ENCODE measurements at regions of chr1 and their contacts with region 1.

Region 1: GRCh38 chr1:205485338-205486228 is 18.9 kb upstream of the CDK18 start:
- DNase-seq: peak; percentile 85
- ATAC-seq: peak; percentile 78
- H3K4me3 ChIP-seq: no peak overlapping the region
- H3K4me3 Mint-ChIP-seq: no peak overlapping the region
- H3K27ac ChIP-seq: no peak overlapping the region
- H3K27ac Mint-ChIP-seq: peak overlapping the region; percentile 17
- H3K4me1 ChIP-seq: peaks cover 22 to 25% of the 10 kb centered on the region in 2 donors
- H3K4me1 Mint-ChIP-seq: peaks cover 28% of the 10 kb centered on the region
- H3K27me3 ChIP-seq: peaks cover 0 to 40% (median 5%) of the 10 kb centered on the region in 4 experiments
- H3K27me3 Mint-ChIP-seq: peaks cover 47% of the 10 kb centered on the region
- CTCF ChIP-seq: peak; percentile 94

Region 2: GRCh38 chr1:205321164-205321958 is 164.2 kb before region 1 on chr1 and contains the start of gene NUAK2:
- CTCF ChIA-PET with region 1: interaction called, 98 read pairs
- POLR2A ChIA-PET with region 1: no interaction called
- intact Hi-C with region 1: no loop called
- DNase-seq: peak; percentile 89
- ATAC-seq: peak; percentile 90
- H3K4me3 ChIP-seq: peak within 1 kb of the TSS; percentile 65 to 100 (median 98)
- H3K4me3 Mint-ChIP-seq: peak within 1 kb of the TSS; percentile 97
- H3K27ac ChIP-seq: peak within 1 kb of the TSS; percentile 65 to 98
- H3K27ac Mint-ChIP-seq: peak within 1 kb of the TSS; percentile 95
- H3K4me1 ChIP-seq: peaks cover 52 to 54% of the 10 kb centered on the region in 2 donors
- H3K4me1 Mint-ChIP-seq: peaks cover 62% of the 10 kb centered on the region
- H3K27me3 ChIP-seq: no peaks in the 10 kb centered on the region
- H3K27me3 Mint-ChIP-seq: peaks cover 2% of the 10 kb centered on the region
- CTCF ChIP-seq: peak; percentile 35
- total RNA-seq, gene NUAK2: 102 and 105 TPM in 2 replicates

Region 3: GRCh38 chr1:205344066-205344928 is 141.3 kb before region 1 on chr1:
- CTCF ChIA-PET with region 1: interaction called, 131 read pairs
- POLR2A ChIA-PET with region 1: interaction called, 3 read pairs
- intact Hi-C with region 1: no loop called
- DNase-seq: peak; percentile 69
- ATAC-seq: peak; percentile 61
- H3K4me3 ChIP-seq: peak overlapping the region in 4 of 5 experiments; percentile 37 to 51 (median 50)
- H3K4me3 Mint-ChIP-seq: peak overlapping the region; percentile 84
- H3K27ac ChIP-seq: no peak overlapping the region
- H3K27ac Mint-ChIP-seq: peak overlapping the region; percentile 32
- H3K4me1 ChIP-seq: peaks cover 34 to 42% of the 10 kb centered on the region in 2 donors
- H3K4me1 Mint-ChIP-seq: peaks cover 48% of the 10 kb centered on the region
- H3K27me3 ChIP-seq: peaks cover 0 to 20% (median 10%) of the 10 kb centered on the region in 4 experiments
- H3K27me3 Mint-ChIP-seq: peaks cover 8% of the 10 kb centered on the region
- CTCF ChIP-seq: no peak

Region 4: DNA sequence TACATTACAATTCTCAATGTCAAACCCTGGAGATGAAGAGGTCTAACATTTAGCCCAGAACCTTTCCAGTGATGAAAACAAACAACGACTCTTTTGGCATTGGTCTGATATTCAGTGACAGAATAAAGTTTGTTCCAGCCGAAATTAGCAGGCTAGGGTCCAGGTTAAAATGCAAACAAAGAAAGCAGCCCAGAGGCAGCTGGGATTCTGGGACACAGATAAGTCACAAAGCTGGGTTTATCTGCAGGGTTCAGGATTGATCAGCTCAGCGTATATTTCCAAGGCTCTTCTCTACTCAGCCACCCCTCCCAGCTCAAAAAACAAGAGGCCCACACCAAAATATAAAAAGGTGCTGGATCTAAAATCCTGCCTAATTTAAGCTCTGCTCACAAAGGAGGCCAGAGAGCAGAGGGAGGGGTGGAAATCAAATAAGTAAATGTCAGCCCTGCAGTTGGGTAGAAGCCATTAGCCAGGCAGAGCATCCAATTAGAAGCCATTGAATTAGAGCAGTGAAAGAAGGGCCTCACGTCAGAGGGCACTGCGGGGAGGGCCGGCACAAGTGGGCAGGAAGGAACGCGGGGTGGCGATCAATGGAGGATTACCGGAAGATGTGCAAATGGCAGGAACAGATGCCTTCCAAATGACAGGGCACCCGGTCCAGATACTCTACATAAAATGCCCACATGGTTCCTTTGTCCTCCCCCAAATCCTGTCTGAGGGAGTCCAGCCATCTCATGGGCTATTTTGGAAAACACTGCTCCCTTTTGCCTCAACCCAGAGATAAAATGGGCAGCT is 125.6 kb before region 1 on chr1:
- CTCF ChIA-PET with region 1: interaction called, 115 read pairs
- POLR2A ChIA-PET with region 1: no interaction called
- intact Hi-C with region 1: no loop called
- DNase-seq: no peak
- ATAC-seq: no peak
- H3K4me3 ChIP-seq: no peak overlapping the region
- H3K4me3 Mint-ChIP-seq: no peak overlapping the region
- H3K27ac ChIP-seq: no peak overlapping the region
- H3K27ac Mint-ChIP-seq: no peak overlapping the region
- H3K4me1 ChIP-seq: peaks cover 0 to 5% of the 10 kb centered on the region in 2 donors
- H3K4me1 Mint-ChIP-seq: peaks cover 4% of the 10 kb centered on the region
- H3K27me3 ChIP-seq: peaks cover 0 to 4% (median 0%) of the 10 kb centered on the region in 4 experiments
- H3K27me3 Mint-ChIP-seq: peaks cover 16% of the 10 kb centered on the region
- CTCF ChIP-seq: no peak

Region 5: GRCh38 chr1:205422993-205423625 is 62.5 kb before region 1 on chr1:
- CTCF ChIA-PET with region 1: interaction called, 59 read pairs
- POLR2A ChIA-PET with region 1: no interaction called
- intact Hi-C with region 1: no loop called
- DNase-seq: no peak
- ATAC-seq: no peak
- H3K4me3 ChIP-seq: no peak overlapping the region
- H3K4me3 Mint-ChIP-seq: no peak overlapping the region
- H3K27ac ChIP-seq: no peak overlapping the region
- H3K27ac Mint-ChIP-seq: no peak overlapping the region
- H3K4me1 ChIP-seq: no peaks in the 10 kb centered on the region
- H3K4me1 Mint-ChIP-seq: no peaks in the 10 kb centered on the region
- H3K27me3 ChIP-seq: peaks cover 0 to 12% (median 2%) of the 10 kb centered on the region in 4 experiments
- H3K27me3 Mint-ChIP-seq: peaks cover 30% of the 10 kb centered on the region
- CTCF ChIP-seq: no peak

Region 6: GRCh38 chr1:205440476-205441317 is 44.9 kb before region 1 on chr1:
- CTCF ChIA-PET with region 1: interaction called, 134 read pairs
- POLR2A ChIA-PET with region 1: interaction called, 4 read pairs
- intact Hi-C with region 1: no loop called
- DNase-seq: peak; percentile 73
- ATAC-seq: peak; percentile 83
- H3K4me3 ChIP-seq: peak overlapping the region in 4 of 5 experiments; percentile 20 to 50 (median 44)
- H3K4me3 Mint-ChIP-seq: peak overlapping the region; percentile 80
- H3K27ac ChIP-seq: peak overlapping the region; percentile 25 to 37
- H3K27ac Mint-ChIP-seq: peak overlapping the region; percentile 84
- H3K4me1 ChIP-seq: peaks cover 49 to 59% of the 10 kb centered on the region in 2 donors
- H3K4me1 Mint-ChIP-seq: peaks cover 62% of the 10 kb centered on the region
- H3K27me3 ChIP-seq: peaks cover 0 to 8% (median 2%) of the 10 kb centered on the region in 4 experiments
- H3K27me3 Mint-ChIP-seq: peaks cover under 1% of the 10 kb centered on the region
- CTCF ChIP-seq: no peak

Measured in B cell (primary cell).